ENCODE measurements at regions of chr1 and their contacts with region 1.

Region 1: DNA sequence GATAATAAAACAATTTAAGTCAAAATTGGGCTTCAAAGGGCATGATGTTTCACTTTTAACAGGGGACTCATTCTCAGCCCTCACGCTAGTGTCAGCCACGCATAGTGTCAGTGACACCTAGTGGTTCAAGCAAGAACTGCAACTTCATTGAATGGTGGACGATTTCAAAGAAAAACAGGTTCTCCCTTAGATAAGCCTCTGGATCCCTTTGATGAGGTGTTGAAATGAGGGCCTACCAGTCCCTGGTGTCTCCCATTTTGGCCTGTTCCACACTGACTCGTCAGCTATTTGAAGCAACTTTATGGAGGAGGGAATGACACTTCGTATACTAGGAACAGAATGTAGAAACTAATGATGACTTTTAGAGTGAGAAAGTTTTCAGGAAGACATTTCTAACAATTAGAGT is 56.2 kb downstream of the FCRL5 start:
- DNase-seq: peak in 7 of 9 experiments; percentile 5 to 61 (median 36)
- ATAC-seq: peak; percentile 54
- H3K4me3 ChIP-seq: no peak overlapping the region
- H3K4me3 Mint-ChIP-seq: no peak overlapping the region
- H3K27ac ChIP-seq: no peak overlapping the region
- H3K27ac Mint-ChIP-seq: no peak overlapping the region
- H3K4me1 ChIP-seq: no peaks in the 10 kb centered on the region
- H3K4me1 Mint-ChIP-seq: no peaks in the 10 kb centered on the region
- H3K27me3 ChIP-seq: no peaks in the 10 kb centered on the region
- H3K27me3 Mint-ChIP-seq: peaks cover 24% of the 10 kb centered on the region
- CTCF ChIP-seq: peak; percentile 89

Region 2: GRCh38 chr1:157369808-157370521 is 126.2 kb before region 1 on chr1:
- CTCF ChIA-PET with region 1: interaction called, 16 read pairs
- POLR2A ChIA-PET with region 1: no interaction called
- intact Hi-C with region 1: loop called (anchors 1 to 5 kb)
- DNase-seq: peak in 7 of 9 experiments; percentile 3 to 60 (median 35)
- ATAC-seq: no peak
- H3K4me3 ChIP-seq: no peak overlapping the region
- H3K4me3 Mint-ChIP-seq: no peak overlapping the region
- H3K27ac ChIP-seq: no peak overlapping the region
- H3K27ac Mint-ChIP-seq: no peak overlapping the region
- H3K4me1 ChIP-seq: no peaks in the 10 kb centered on the region
- H3K4me1 Mint-ChIP-seq: no peaks in the 10 kb centered on the region
- H3K27me3 ChIP-seq: no peaks in the 10 kb centered on the region
- H3K27me3 Mint-ChIP-seq: peaks cover 8% of the 10 kb centered on the region
- CTCF ChIP-seq: peak; percentile 83

Region 3: GRCh38 chr1:157482174-157482573 is 13.9 kb before region 1 on chr1:
- CTCF ChIA-PET with region 1: interaction called, 13 read pairs
- POLR2A ChIA-PET with region 1: no interaction called
- intact Hi-C with region 1: no loop called
- DNase-seq: no peak
- ATAC-seq: no peak
- H3K4me3 ChIP-seq: no peak overlapping the region
- H3K4me3 Mint-ChIP-seq: no peak overlapping the region
- H3K27ac ChIP-seq: no peak overlapping the region
- H3K27ac Mint-ChIP-seq: no peak overlapping the region
- H3K4me1 ChIP-seq: no peaks in the 10 kb centered on the region
- H3K4me1 Mint-ChIP-seq: no peaks in the 10 kb centered on the region
- H3K27me3 ChIP-seq: peaks cover 0 to 2% of the 10 kb centered on the region in 2 experiments
- H3K27me3 Mint-ChIP-seq: peaks cover 7% of the 10 kb centered on the region
- CTCF ChIP-seq: no peak